IMR-90 (cell line): ENCODE measurements at regions of chr5 and their contacts with region 1.

Region 1: GRCh38 chr5:108521841-108522506 is 140.1 kb upstream of the FBXL17 start:
- DNase-seq: peak; percentile 72
- ATAC-seq: peak; percentile 98
- H3K4me3 ChIP-seq: no peak overlapping the region
- H3K27ac ChIP-seq: no peak overlapping the region
- H3K4me1 ChIP-seq: peaks cover 3% of the 10 kb centered on the region
- H3K27me3 ChIP-seq: peaks cover 2% of the 10 kb centered on the region; the same call in 1 of the 2 replicates
- CTCF ChIP-seq: peak; percentile 76
- POLR2A ChIP-seq: no peak
- RAD21 ChIP-seq: peak; percentile 86

Region 2: DNA sequence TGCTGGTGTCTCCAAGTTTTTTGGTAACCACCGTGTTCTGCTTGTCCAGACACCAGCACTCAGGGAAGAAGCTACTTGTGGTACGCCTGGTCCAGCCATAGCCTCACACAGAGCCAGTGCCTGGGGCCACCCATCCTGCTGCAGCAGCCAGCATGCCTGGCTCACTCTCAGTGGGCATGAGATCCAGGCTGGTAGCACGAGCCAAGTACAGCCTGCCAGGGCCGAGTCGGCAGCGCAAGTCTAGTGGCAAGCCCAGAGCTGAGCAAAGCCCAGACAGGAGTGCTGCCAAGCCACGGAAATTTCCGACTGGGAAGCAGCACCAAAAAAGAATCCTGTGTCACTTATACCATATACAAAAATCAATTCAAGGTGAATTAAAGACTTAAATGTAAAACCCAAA is 103.8 kb before region 1 on chr5:
- CTCF ChIA-PET with region 1: no interaction called
- POLR2A ChIA-PET with region 1: no interaction called
- dilution Hi-C with region 1: no loop called
- in situ Hi-C with region 1: no loop called
- intact Hi-C with region 1: no loop called
- DNase-seq: no peak
- ATAC-seq: no peak
- H3K4me3 ChIP-seq: no peak overlapping the region
- H3K27ac ChIP-seq: no peak overlapping the region
- H3K4me1 ChIP-seq: no peaks in the 10 kb centered on the region
- H3K27me3 ChIP-seq: no peaks in the 10 kb centered on the region
- CTCF ChIP-seq: no peak
- POLR2A ChIP-seq: no peak
- RAD21 ChIP-seq: no peak

Region 3: DNA sequence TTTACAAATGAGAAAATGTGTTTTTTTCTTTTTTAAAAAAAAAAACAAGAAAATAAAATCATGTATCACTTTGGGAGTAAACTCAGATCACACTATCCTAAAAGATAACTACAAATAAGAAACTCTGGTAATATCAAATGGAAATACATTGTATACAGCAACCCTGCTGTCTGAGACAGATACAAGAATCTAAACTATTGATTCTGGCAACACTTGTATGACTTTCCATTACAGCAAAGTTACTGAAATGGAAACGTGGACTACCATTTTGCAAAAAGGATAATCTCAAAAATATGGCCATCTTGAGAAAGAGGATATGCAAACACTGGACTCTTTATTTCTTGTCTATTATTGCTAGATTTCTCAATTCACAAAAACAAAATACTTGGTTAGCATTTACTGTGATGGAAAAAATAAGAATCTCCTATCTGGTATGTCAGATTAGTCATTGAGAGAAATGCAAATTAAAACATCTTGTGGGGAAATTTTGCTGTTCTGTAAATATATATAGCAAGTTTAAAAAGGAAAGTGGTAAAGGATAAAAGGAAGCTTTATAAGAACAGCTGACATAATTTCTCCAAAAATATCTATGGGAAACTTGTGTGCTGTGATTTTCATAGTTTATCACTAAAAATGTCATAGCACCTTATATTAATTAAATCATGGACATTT is 112.8 kb after region 1 on chr5:
- CTCF ChIA-PET with region 1: no interaction called
- POLR2A ChIA-PET with region 1: no interaction called
- dilution Hi-C with region 1: no loop called
- in situ Hi-C with region 1: no loop called
- intact Hi-C with region 1: loop called (anchors 2 kb)
- DNase-seq: peak; percentile 35
- ATAC-seq: peak; percentile 47
- H3K4me3 ChIP-seq: no peak overlapping the region
- H3K27ac ChIP-seq: no peak overlapping the region
- H3K4me1 ChIP-seq: peaks cover 7% of the 10 kb centered on the region
- H3K27me3 ChIP-seq: no peaks in the 10 kb centered on the region
- CTCF ChIP-seq: no peak
- POLR2A ChIP-seq: no peak
- RAD21 ChIP-seq: no peak

Region 4: GRCh38 chr5:108642167-108642906 is 120.4 kb after region 1 on chr5:
- CTCF ChIA-PET with region 1: no interaction called
- POLR2A ChIA-PET with region 1: no interaction called
- dilution Hi-C with region 1: no loop called
- in situ Hi-C with region 1: no loop called
- intact Hi-C with region 1: loop called (anchors 1 kb)
- DNase-seq: peak; percentile 69
- ATAC-seq: peak; percentile 96
- H3K4me3 ChIP-seq: no peak overlapping the region
- H3K27ac ChIP-seq: no peak overlapping the region
- H3K4me1 ChIP-seq: peaks cover 2% of the 10 kb centered on the region; the same call in 1 of the 2 replicates
- H3K27me3 ChIP-seq: no peaks in the 10 kb centered on the region
- CTCF ChIP-seq: peak; percentile 88
- POLR2A ChIP-seq: no peak
- RAD21 ChIP-seq: peak; percentile 89

Region 5: GRCh38 chr5:108681079-108681921 is 159.3 kb after region 1 on chr5:
- CTCF ChIA-PET with region 1: no interaction called
- POLR2A ChIA-PET with region 1: no interaction called
- dilution Hi-C with region 1: no loop called
- in situ Hi-C with region 1: no loop called
- intact Hi-C with region 1: loop called (anchors 5 kb)
- DNase-seq: peak; percentile 78
- ATAC-seq: peak; percentile 95
- H3K4me3 ChIP-seq: no peak overlapping the region
- H3K27ac ChIP-seq: no peak overlapping the region
- H3K4me1 ChIP-seq: no peaks in the 10 kb centered on the region
- H3K27me3 ChIP-seq: peaks cover 7% of the 10 kb centered on the region
- CTCF ChIP-seq: peak; percentile 89
- POLR2A ChIP-seq: no peak
- RAD21 ChIP-seq: peak; percentile 88

Region 6: GRCh38 chr5:109247986-109248385 is 726.0 kb after region 1 on chr5:
- CTCF ChIA-PET with region 1: no interaction called
- POLR2A ChIA-PET with region 1: no interaction called
- dilution Hi-C with region 1: no loop called
- in situ Hi-C with region 1: no loop called
- intact Hi-C with region 1: no loop called
- DNase-seq: no peak
- ATAC-seq: no peak
- H3K4me3 ChIP-seq: no peak overlapping the region
- H3K27ac ChIP-seq: no peak overlapping the region
- H3K4me1 ChIP-seq: no peaks in the 10 kb centered on the region
- H3K27me3 ChIP-seq: no peaks in the 10 kb centered on the region; the same call in 1 of the 2 replicates
- CTCF ChIP-seq: no peak
- POLR2A ChIP-seq: no peak
- RAD21 ChIP-seq: no peak

Region 7: GRCh38 chr5:109347252-109347888 is 825.4 kb after region 1 on chr5:
- CTCF ChIA-PET with region 1: no interaction called
- POLR2A ChIA-PET with region 1: no interaction called
- dilution Hi-C with region 1: no loop called
- in situ Hi-C with region 1: no loop called
- intact Hi-C with region 1: loop called (anchors 10 kb)
- DNase-seq: no peak
- ATAC-seq: no peak
- H3K4me3 ChIP-seq: no peak overlapping the region
- H3K27ac ChIP-seq: no peak overlapping the region
- H3K4me1 ChIP-seq: no peaks in the 10 kb centered on the region
- H3K27me3 ChIP-seq: no peaks in the 10 kb centered on the region
- CTCF ChIP-seq: no peak
- POLR2A ChIP-seq: no peak
- RAD21 ChIP-seq: no peak